Activated T-helper 1 cell treated with anti-CD3 and anti-CD28 coated beads, Interleukin-12 subunit alpha, Interleukin-12 subunit beta, Interleukin-2, Interleukin-4 antibody, amounts not matched to agents 30 ng/mL and 10 ng/mL and 1 ng/mL, durations not matched to agents 14 hours and 24 hours and 36 hours (primary cell): ENCODE measurements at regions of chr2 and their contacts with region 1.

Region 1: GRCh38 chr2:86221066-86221684 is 21.9 kb downstream of the MRPL35 start:
- DNase-seq: peak; percentile 20
- H3K4me3 Mint-ChIP-seq: no peak overlapping the region
- H3K27ac Mint-ChIP-seq: no peak overlapping the region
- H3K4me1 Mint-ChIP-seq: peaks cover 51% of the 10 kb centered on the region
- H3K27me3 Mint-ChIP-seq: no peaks in the 10 kb centered on the region

Region 2: DNA sequence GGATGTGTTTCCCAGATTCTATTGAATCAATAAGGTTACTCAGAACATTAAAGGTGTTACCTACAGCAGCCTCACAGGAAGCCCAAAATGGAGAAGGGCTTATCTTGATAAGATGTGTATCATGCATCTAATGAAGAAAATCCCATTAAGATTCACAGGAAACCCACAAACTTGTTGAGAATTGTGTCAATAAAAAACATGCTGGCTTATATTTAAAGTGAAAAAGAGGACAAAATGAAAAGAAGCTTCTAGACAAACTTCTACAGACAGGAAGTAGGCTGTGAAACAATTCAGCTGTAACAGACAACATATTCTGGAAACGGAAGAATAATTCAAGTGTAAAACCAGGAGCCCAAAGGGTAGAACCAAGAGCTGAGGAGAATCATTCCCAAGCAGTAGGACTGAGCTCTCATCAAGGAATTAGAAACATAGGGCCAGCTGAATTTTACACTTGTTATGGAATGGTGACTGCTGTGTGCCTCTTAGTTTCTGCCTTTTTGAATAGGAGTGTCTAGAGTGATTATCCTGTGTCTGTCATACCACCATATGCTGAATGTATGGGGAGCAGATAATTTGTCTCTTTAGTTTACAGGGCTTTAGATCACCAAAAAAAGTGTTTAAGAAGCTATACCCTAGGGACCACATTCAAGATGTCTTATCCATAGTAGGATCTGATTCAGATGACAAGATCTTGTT is 35.5 kb before region 1 on chr2:
- intact Hi-C with region 1: no loop called
- DNase-seq: no peak
- H3K4me3 Mint-ChIP-seq: peak overlapping the region; percentile 57
- H3K27ac Mint-ChIP-seq: peak overlapping the region; percentile 92
- H3K4me1 Mint-ChIP-seq: peaks cover 75% of the 10 kb centered on the region
- H3K27me3 Mint-ChIP-seq: no peaks in the 10 kb centered on the region

Region 3: GRCh38 chr2:86238354-86238753 is 17.2 kb after region 1 on chr2:
- intact Hi-C with region 1: loop called (anchors 1 kb)
- DNase-seq: peak; percentile 51
- H3K4me3 Mint-ChIP-seq: peak overlapping the region; percentile 21
- H3K27ac Mint-ChIP-seq: peak overlapping the region; percentile 41
- H3K4me1 Mint-ChIP-seq: peaks cover 15% of the 10 kb centered on the region
- H3K27me3 Mint-ChIP-seq: peaks cover 5% of the 10 kb centered on the region

Region 4: DNA sequence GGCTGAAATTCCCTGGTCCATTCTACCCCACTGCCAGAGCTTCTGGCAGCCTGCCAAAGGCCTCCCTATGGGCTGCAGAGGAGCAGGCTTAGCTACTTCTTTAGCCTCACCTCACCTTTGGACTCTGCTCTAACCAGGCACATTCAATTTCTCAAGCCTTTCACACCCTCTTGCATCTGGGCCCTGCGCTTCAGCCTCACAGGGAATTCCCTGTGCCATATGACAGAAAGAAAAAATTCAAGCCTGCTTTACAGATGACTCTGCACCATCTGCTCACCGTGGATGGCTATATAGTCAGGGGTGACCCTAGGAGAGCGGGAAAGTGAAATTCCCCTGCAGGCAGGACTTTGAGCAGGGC is 53.7 kb after region 1 on chr2:
- intact Hi-C with region 1: no loop called
- DNase-seq: no peak
- H3K4me3 Mint-ChIP-seq: no peak overlapping the region
- H3K27ac Mint-ChIP-seq: no peak overlapping the region
- H3K4me1 Mint-ChIP-seq: peaks cover 28% of the 10 kb centered on the region
- H3K27me3 Mint-ChIP-seq: no peaks in the 10 kb centered on the region

Region 5: DNA sequence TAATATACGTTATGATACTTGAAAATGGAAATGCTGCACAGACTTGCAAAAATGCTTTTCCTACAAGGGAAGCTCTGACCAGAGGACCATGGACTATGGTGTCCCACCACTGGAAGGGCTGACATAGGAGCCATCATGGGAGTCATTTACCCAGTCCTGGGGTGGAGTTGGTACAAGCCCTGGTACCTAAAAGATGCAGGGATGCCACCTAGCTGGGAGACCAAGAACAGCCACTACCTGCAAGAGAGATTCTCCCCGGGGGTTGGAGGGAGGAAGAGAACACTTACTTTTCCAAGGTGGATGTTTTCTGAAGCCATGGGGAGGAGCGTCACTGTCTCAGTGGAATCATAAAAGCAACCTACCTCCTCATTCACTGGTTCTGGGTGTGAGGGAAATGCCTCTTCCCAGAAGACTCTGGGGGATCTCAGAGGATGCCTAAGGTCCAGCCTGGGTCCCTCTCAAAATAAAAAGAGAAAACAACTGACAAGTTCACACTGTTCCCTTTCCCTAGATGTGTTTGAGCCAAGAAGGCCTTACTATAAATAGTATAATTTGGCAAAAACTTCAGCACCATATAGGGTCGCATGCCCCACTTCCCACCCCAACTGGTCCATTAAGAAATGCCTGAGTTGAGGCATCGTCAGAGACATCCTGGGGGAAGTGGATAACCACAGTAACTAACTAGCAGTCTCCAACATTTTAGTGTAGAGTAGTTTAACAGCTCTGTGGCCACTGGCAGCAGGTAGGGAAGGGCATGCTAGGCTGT is 76.4 kb after region 1 on chr2:
- intact Hi-C with region 1: loop called (anchors 1 kb)
- DNase-seq: no peak
- H3K4me3 Mint-ChIP-seq: no peak overlapping the region
- H3K27ac Mint-ChIP-seq: no peak overlapping the region
- H3K4me1 Mint-ChIP-seq: no peaks in the 10 kb centered on the region
- H3K27me3 Mint-ChIP-seq: peaks cover 22% of the 10 kb centered on the region

Region 6: GRCh38 chr2:86368161-86368824 is 147.1 kb after region 1 on chr2:
- intact Hi-C with region 1: loop called (anchors 1 kb)
- DNase-seq: peak; percentile 8
- H3K4me3 Mint-ChIP-seq: peak overlapping the region; percentile 13
- H3K27ac Mint-ChIP-seq: no peak overlapping the region
- H3K4me1 Mint-ChIP-seq: peaks cover 20% of the 10 kb centered on the region
- H3K27me3 Mint-ChIP-seq: no peaks in the 10 kb centered on the region